ENCODE measurements at regions of chr3 and their contacts with region 1.

Region 1: DNA sequence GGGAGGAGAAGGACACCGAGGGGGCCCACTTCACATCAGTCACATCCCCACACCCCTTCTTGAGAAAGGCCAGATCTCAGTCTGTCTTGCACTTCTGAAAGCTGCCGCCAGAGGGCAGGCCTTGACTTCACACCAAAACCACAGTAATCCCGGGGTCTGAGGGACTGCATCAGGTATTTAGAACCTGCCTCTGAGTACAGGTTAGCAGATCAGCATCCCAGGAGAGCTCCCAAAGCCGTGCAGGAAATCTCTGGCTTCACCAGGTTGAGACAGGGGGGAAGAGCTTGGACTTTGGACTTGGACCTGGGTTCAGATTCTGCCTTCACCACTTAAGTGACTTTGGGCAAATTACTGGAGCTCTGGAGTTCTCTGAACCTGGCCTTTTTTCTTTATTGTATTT is 50.3 kb downstream of the LHFPL4 start:
- DNase-seq: peak; percentile 78
- H3K4me3 Mint-ChIP-seq: no peak overlapping the region
- H3K27ac Mint-ChIP-seq: no peak overlapping the region
- H3K4me1 Mint-ChIP-seq: peaks cover 2% of the 10 kb centered on the region
- H3K27me3 Mint-ChIP-seq: peaks cover 26% of the 10 kb centered on the region

Region 2: GRCh38 chr3:9352917-9353752 is 150.1 kb before region 1 on chr3:
- CTCF ChIA-PET with region 1: interaction called, 15 read pairs
- POLR2A ChIA-PET with region 1: no interaction called
- DNase-seq: peak; percentile 72
- H3K4me3 Mint-ChIP-seq: no peak overlapping the region
- H3K27ac Mint-ChIP-seq: peak overlapping the region; percentile 28
- H3K4me1 Mint-ChIP-seq: peaks cover 32% of the 10 kb centered on the region
- H3K27me3 Mint-ChIP-seq: no peaks in the 10 kb centered on the region

Region 3: DNA sequence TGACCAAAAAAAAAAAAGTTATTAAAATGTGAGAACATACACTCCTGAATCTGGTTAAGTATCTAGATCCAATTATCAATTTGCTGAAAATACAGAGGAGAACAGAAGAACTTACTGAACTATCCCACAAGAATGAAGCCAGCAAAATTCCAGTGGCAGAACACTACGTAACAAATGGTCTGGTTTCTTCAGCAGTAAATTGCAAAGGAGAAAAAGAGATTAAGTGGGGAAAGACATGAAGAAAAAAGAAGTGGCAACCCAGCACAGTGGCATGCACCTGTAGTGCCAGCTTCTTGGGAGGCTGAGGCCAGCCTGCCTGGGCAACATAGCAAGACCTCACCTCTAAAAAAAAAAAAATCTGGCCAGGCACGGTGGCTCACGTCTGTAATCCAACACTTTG is 11.8 kb before region 1 on chr3:
- CTCF ChIA-PET with region 1: interaction called, 28 read pairs
- POLR2A ChIA-PET with region 1: interaction called, 3 read pairs
- DNase-seq: no peak
- H3K4me3 Mint-ChIP-seq: no peak overlapping the region
- H3K27ac Mint-ChIP-seq: no peak overlapping the region
- H3K4me1 Mint-ChIP-seq: no peaks in the 10 kb centered on the region
- H3K27me3 Mint-ChIP-seq: no peaks in the 10 kb centered on the region